ENCODE measurements at regions of chr4 and their contacts with region 1.

Region 1: DNA sequence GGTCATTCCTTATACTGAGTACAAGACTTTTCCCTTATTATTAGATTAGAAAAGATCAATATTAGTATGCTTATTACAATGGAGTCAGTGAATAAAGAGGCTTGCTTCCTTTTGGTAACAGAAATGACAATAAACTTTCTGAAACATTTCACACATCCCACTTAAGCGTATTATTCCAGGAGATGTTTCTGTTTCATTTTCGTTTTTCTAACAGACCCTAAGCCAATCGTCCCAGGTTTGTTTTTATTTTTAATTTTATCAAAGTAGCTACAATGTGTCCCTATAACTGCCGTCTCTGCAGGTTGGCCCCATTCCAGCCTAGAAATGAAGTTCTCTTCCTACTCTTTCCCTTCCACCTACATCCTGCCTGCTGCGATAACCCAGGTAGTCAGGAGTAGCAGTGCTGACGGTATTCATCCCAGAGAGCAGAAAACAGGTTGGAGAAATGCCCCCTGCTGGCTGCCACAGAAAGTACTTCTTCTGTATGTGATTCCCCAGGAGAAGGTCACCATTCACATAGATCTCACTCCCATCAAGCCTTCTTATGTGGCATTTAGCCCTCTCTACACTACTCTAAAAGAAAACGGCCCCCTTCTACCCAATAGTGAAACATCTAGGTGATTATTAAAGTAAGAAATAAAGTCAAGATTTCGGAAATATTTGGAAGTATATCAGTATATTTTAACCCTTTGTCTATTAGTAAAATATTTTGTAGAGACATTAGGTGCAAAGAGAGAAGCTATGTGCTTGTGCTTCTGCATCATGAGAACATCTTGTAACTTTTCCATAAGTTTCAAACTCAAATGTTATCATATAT is 40.4 kb downstream of the ENPEP start:
- DNase-seq: peak; percentile 80

Region 2: GRCh38 chr4:110344162-110344561 is 172.2 kb before region 1 on chr4:
- in situ Hi-C with region 1: loop called (anchors 25 kb)
- DNase-seq: peak; percentile 40

Region 3: GRCh38 chr4:110654254-110654635 is 137.9 kb after region 1 on chr4:
- in situ Hi-C with region 1: no loop called
- DNase-seq: no peak

Measured in KBM-7 (cell line).